SK-N-SH (cell line): ENCODE measurements at regions of chr17 and their contacts with region 1.

Region 1: DNA sequence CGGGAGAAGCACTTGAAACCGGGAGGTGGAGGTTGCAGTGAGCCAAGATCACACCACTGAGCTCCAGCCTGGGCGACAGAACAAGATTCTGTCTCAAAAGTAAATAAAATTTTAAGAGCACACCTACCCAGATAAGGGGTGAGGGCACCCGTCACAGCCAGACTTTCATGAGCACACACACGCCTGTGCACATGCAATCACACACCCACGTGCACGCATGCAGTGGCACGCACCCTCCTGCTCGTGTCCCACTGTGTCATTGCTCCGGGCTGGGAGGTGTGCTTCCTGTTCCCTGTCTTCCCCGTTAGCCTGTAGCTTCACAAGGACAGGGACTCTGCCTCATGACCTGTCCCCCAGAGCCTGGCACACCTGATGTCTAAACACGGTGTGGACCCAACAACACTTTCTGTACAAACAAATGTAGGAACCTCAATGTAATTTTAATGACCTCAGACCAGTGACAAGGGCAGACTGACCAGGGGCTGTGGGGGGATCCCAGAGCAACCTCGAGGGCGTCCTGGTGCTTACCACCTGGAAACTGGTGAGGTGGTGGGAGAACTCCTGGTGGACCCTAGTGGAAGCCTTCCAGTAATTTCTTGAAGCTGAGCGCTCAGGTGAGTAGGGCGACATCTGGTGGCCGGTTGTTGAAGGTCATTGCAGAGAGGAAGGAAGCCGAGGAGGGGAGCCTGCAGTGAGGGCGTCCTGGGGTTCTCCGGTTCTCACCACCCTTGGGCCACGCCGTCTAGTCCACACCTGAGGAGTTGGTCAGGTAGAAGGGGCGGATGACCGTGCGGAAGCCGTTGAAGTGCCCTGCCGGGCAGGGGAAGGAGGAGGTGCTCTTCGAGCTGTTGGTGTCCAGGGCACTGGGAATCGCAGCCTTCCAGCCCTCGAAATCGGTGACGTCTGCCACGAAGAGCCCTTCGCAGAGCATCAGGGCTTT is 8.6 kb downstream of the LGALS3BP start:
- DNase-seq: peak; percentile 93
- H3K4me3 ChIP-seq: peak overlapping the region in 1 of 2 experiments; percentile 9; a peak in 1 of 4 replicates
- H3K27ac ChIP-seq: peak overlapping the region; percentile 9 to 65; a peak in 3 of 4 replicates
- H3K4me1 ChIP-seq: peaks cover 0 to 29% of the 10 kb centered on the region in 2 experiments; a peak in 1 of 4 replicates
- H3K27me3 ChIP-seq: no peaks in the 10 kb centered on the region
- CTCF ChIP-seq: peak; percentile 97
- EP300 ChIP-seq: no peak
- RAD21 ChIP-seq: peak; percentile 96

Region 2: DNA sequence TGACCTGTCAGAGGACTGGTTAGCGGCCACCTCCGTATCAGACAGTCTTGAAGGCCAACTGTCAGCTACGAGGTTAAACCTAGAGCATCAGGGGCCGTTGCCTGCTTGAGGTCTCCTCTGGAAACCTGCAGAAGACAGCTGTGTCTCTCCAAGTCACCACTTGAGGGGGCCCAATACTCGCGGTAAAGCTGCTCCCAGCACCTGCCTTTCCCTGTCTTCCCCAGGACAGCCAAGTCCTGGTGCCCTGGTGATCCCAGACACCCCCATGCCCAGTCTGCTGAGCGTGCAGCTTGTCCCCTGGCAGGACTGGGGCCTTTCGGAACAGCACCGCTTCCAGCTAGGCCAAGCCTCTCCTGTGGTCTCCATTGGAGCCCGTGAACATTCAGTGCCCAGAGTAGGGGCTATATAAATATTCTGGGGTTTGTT is 474.0 kb before region 1 on chr17:
- CTCF ChIA-PET with region 1: interaction called, 13 read pairs
- POLR2A ChIA-PET with region 1: no interaction called
- DNase-seq: peak; percentile 96
- H3K4me3 ChIP-seq: no peak overlapping the region
- H3K27ac ChIP-seq: no peak overlapping the region
- H3K4me1 ChIP-seq: peaks cover 0 to 23% of the 10 kb centered on the region in 2 experiments; a peak in 1 of 4 replicates
- H3K27me3 ChIP-seq: no peaks in the 10 kb centered on the region
- CTCF ChIP-seq: peak; percentile 92
- EP300 ChIP-seq: no peak
- RAD21 ChIP-seq: peak; percentile 100

Region 3: GRCh38 chr17:78865682-78866390 is 105.3 kb before region 1 on chr17:
- CTCF ChIA-PET with region 1: interaction called, 458 read pairs
- POLR2A ChIA-PET with region 1: interaction called, 15 read pairs
- DNase-seq: peak; percentile 89
- H3K4me3 ChIP-seq: peak overlapping the region in 1 of 2 experiments; percentile 26; a peak in 1 of 4 replicates
- H3K27ac ChIP-seq: peak overlapping the region; percentile 21 to 53; a peak in 2 of 4 replicates
- H3K4me1 ChIP-seq: peaks cover 3 to 19% of the 10 kb centered on the region in 2 experiments; a peak in 3 of 4 replicates
- H3K27me3 ChIP-seq: no peaks in the 10 kb centered on the region
- CTCF ChIP-seq: peak; percentile 99
- EP300 ChIP-seq: peak in 1 of 2 experiments; percentile 28; a peak in 2 of 4 replicates
- RAD21 ChIP-seq: peak; percentile 99

Region 4: DNA sequence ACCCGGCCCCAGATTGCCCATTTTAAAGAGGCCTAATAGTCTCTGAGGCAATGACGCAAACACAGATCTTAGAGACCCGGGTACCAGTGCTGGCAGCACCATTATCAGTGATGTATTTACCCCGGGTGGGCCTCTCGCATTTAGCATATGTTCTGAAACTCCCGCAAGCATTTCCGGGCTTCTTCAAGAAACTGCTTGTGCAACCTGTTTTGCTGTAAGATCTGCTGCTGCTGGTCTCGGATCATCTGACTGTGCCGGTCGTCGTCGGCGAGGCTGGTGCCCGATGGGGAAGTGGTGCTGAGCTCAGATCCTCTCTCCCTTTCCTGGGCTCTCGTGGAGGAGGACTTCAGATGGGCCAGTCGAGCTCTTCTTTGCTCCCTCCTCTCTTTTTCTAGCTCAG is 80.6 kb before region 1 on chr17:
- CTCF ChIA-PET with region 1: interaction called, 68 read pairs
- POLR2A ChIA-PET with region 1: interaction called, 4 read pairs
- DNase-seq: no peak
- H3K4me3 ChIP-seq: no peak overlapping the region
- H3K27ac ChIP-seq: peak overlapping the region in 1 of 2 experiments; percentile 98; a peak in 2 of 4 replicates
- H3K4me1 ChIP-seq: peaks cover 0 to 60% of the 10 kb centered on the region in 2 experiments; a peak in 2 of 4 replicates
- H3K27me3 ChIP-seq: no peaks in the 10 kb centered on the region
- CTCF ChIP-seq: no peak
- EP300 ChIP-seq: no peak
- RAD21 ChIP-seq: no peak

Region 5: GRCh38 chr17:78910497-78911284 is 60.4 kb before region 1 on chr17:
- CTCF ChIA-PET with region 1: interaction called, 17 read pairs
- POLR2A ChIA-PET with region 1: interaction called, 3 read pairs
- DNase-seq: no peak
- H3K4me3 ChIP-seq: no peak overlapping the region
- H3K27ac ChIP-seq: peak overlapping the region in 1 of 2 experiments; percentile 5; a peak in 1 of 4 replicates
- H3K4me1 ChIP-seq: peaks cover 0 to 28% of the 10 kb centered on the region in 2 experiments; a peak in 1 of 4 replicates
- H3K27me3 ChIP-seq: no peaks in the 10 kb centered on the region
- CTCF ChIP-seq: no peak
- EP300 ChIP-seq: no peak
- RAD21 ChIP-seq: no peak

Region 6: GRCh38 chr17:78933959-78934568 is 37.0 kb before region 1 on chr17:
- CTCF ChIA-PET with region 1: interaction called, 93 read pairs
- POLR2A ChIA-PET with region 1: interaction called, 10 read pairs
- DNase-seq: peak; percentile 86
- H3K4me3 ChIP-seq: peak overlapping the region; percentile 23 to 55
- H3K27ac ChIP-seq: peak overlapping the region; percentile 98
- H3K4me1 ChIP-seq: peaks cover 37 to 43% of the 10 kb centered on the region in 2 experiments
- H3K27me3 ChIP-seq: no peaks in the 10 kb centered on the region
- CTCF ChIP-seq: no peak
- EP300 ChIP-seq: peak in 1 of 2 experiments; percentile 66; a peak in 2 of 4 replicates
- RAD21 ChIP-seq: no peak